ENCODE measurements at regions of chr16 and their contacts with region 1.

Region 1: GRCh38 chr16:20598832-20599469 is 22.8 kb upstream of the ACSM2B start:
- DNase-seq: peak; percentile 54 to 73
- H3K4me3 ChIP-seq: no peak overlapping the region
- H3K4me3 Mint-ChIP-seq: no peak overlapping the region
- H3K27ac Mint-ChIP-seq: no peak overlapping the region
- H3K4me1 ChIP-seq: no peaks in the 10 kb centered on the region
- H3K4me1 Mint-ChIP-seq: no peaks in the 10 kb centered on the region
- H3K27me3 ChIP-seq: no peaks in the 10 kb centered on the region
- H3K27me3 Mint-ChIP-seq: no peaks in the 10 kb centered on the region
- CTCF ChIP-seq: no peak

Region 2: GRCh38 chr16:20695024-20695423 is 96.1 kb after region 1 on chr16:
- CTCF ChIA-PET with region 1: no interaction called
- POLR2A ChIA-PET with region 1: no interaction called
- intact Hi-C with region 1: loop called (anchors 1 kb)
- DNase-seq: no peak
- H3K4me3 ChIP-seq: no peak overlapping the region
- H3K4me3 Mint-ChIP-seq: no peak overlapping the region
- H3K27ac Mint-ChIP-seq: no peak overlapping the region
- H3K4me1 ChIP-seq: no peaks in the 10 kb centered on the region
- H3K4me1 Mint-ChIP-seq: no peaks in the 10 kb centered on the region
- H3K27me3 ChIP-seq: no peaks in the 10 kb centered on the region
- H3K27me3 Mint-ChIP-seq: peaks cover under 1% of the 10 kb centered on the region
- CTCF ChIP-seq: no peak

Region 3: DNA sequence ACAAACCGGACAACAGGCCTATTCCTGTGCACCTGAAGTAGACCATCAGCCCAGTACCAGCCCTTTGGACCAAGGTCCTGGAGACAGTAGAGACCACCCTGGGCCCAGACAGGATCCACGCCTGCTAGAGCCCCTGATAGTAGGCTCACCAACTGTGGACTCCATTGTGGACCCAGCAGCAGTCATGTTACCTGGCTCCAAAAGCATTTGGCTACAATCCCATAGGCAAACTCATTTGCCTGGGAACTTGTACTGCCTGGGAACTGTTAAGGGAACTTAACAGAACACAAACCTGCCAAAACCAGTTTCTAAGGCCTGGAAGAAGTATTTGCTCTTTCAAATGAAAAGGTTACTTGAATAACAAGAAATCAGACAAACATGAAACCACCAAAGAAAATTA is 108.5 kb after region 1 on chr16:
- CTCF ChIA-PET with region 1: no interaction called
- POLR2A ChIA-PET with region 1: no interaction called
- intact Hi-C with region 1: no loop called
- DNase-seq: no peak
- H3K4me3 ChIP-seq: no peak overlapping the region
- H3K4me3 Mint-ChIP-seq: no peak overlapping the region
- H3K27ac Mint-ChIP-seq: no peak overlapping the region
- H3K4me1 ChIP-seq: no peaks in the 10 kb centered on the region
- H3K4me1 Mint-ChIP-seq: no peaks in the 10 kb centered on the region
- H3K27me3 ChIP-seq: no peaks in the 10 kb centered on the region
- H3K27me3 Mint-ChIP-seq: no peaks in the 10 kb centered on the region
- CTCF ChIP-seq: no peak